ENCODE measurements at regions of chr21 and their contacts with region 1.

Region 1: DNA sequence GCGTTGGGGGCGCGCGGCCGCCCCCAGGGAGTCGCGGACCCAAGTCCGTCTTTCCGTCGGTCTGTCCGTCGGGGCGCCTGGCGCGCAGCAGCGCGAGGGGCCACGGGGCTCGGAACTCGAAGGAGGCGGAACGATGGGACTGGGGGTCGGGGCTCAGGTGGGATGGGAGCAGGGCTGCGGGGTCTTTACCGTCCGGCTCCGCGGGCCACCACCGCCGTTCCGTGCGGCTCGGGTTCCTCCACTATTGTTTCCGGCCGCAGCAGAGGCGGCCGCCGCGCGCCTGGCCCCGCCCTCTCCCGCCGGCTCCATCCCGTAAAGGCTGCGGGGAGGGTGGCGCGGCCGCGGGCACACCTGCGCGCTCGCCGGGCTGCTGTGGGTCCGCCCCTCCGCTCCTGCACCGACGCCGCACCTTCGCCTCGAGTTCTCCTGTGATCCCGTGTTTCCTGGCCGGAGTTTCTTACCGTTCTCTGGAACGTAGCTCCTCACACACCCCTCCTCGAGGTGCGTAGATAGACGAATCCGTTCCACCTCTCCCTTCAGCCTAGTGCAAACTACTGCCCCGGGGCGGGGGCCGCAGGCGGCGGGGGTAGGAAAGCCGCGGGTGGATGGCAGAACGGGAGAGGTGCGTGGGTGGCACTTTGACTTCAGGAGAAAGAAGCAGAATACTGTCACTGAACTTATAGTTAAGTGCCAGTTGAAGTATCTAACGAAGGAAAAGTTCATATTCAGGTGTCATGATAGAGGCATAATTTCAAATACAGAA is at the start of gene C21orf91:
- DNase-seq: peak; percentile 94 to 95
- ATAC-seq: peak; percentile 97
- H3K4me3 ChIP-seq: peak within 1 kb of the TSS; percentile 63 to 92
- H3K27ac ChIP-seq: peak within 1 kb of the TSS; percentile 23 to 81
- H3K4me1 ChIP-seq: peaks cover 0 to 2% of the 10 kb centered on the region in 2 donors
- H3K27me3 ChIP-seq: no peaks in the 10 kb centered on the region
- total RNA-seq, gene C21orf91: 17.5 to 19.2 TPM

Region 2: GRCh38 chr21:17611414-17612022 is 207.8 kb before region 1 on chr21:
- intact Hi-C with region 1: loop called in 1 of 2 experiments (anchors 5 kb)
- DNase-seq: peak; percentile 90 to 92
- ATAC-seq: peak; percentile 89
- H3K4me3 ChIP-seq: peak overlapping the region; percentile 58 to 99
- H3K27ac ChIP-seq: peak overlapping the region in 1 of 2 donors; percentile 74
- H3K4me1 ChIP-seq: peaks cover 0 to 3% of the 10 kb centered on the region in 2 donors
- H3K27me3 ChIP-seq: no peaks in the 10 kb centered on the region

Region 3: DNA sequence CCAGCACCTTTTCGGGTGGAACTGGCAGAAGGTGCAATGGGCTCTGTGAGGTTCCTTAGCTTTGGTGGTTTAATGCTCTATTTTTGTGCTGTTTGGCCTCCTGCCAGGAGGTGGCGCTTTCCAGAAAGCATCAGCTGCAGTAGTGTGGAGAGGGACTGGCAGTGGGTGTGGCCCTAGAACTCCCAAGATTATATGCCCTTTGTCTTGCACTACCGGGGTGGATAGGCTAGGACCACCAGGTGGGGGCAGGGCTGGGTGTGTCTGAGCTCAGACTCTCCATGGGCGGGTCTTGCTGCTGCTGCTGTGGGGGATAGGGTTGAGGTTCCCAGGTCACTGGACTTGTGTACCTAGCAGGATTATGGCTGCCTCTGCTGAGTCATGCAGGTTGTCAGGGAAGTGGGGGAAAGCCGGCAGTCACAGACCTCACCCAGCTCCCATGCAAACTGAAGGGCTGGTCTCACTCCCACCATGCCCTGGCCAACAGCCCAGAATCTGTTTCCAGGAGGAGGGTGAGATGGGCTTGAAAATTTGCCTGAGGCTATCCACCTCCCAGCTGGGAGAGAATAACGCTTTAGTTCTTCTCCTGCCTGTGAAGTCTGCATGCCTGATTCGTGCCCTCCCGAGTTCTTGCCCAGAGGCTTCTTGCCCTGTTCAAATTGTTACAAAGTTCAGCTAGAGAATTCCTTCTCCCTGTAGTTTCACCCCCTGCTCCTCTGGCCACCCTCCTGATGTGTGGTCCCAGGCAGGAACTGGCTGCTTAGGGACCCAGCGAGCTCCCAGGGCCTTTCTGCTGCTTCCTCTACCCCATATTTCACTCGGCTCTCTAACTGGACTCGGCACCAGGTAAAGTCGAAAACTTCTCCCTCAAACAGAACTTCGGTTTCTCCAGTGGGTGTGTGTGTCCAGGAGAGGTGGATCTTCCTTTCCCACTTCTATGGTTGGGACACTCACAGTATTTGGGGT is 130.1 kb before region 1 on chr21:
- intact Hi-C with region 1: loop called in 1 of 2 experiments (anchors 10 kb)
- DNase-seq: peak in 1 of 2 donors; percentile 56
- ATAC-seq: no peak
- H3K4me3 ChIP-seq: no peak overlapping the region
- H3K27ac ChIP-seq: no peak overlapping the region
- H3K4me1 ChIP-seq: no peaks in the 10 kb centered on the region
- H3K27me3 ChIP-seq: no peaks in the 10 kb centered on the region

Region 4: DNA sequence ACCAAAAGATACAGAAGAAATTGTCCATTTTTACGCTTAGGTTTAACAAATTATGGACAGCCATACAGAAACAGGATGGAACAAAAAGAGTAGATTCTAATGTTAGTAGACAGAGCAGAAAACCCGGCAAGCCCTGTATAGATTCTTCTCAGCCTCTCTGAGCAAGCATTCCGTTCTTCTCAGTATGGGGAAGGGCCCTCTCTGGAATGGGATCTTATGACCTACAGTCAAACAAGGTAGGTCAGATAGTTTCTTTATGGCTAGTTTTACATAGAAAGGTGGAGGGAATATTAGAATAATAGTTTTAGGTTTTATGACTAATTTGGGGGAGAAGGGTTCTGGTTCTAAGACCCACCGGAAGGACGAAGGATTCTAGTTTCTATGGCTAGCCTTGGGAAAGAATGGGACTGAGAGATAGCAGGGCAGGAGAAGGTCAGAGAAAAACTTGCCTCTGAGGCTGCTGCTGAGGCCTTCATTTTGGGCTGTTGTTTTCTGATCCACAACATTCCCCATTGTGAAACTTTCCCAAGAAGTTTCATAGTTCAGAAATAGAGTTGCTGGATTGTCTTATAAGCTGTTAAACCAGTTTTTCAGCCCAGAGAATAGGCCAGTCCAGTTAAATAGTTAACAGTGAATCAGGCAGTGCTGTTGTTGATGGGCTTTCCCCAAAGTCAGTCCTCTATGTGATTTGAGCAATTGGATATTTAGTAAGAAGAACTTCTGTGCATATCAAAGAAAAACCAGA is 77.3 kb before region 1 on chr21:
- intact Hi-C with region 1: loop called in 1 of 2 experiments (anchors 10 kb)
- DNase-seq: no peak
- ATAC-seq: no peak
- H3K4me3 ChIP-seq: no peak overlapping the region
- H3K27ac ChIP-seq: no peak overlapping the region
- H3K4me1 ChIP-seq: no peaks in the 10 kb centered on the region
- H3K27me3 ChIP-seq: no peaks in the 10 kb centered on the region

Region 5: DNA sequence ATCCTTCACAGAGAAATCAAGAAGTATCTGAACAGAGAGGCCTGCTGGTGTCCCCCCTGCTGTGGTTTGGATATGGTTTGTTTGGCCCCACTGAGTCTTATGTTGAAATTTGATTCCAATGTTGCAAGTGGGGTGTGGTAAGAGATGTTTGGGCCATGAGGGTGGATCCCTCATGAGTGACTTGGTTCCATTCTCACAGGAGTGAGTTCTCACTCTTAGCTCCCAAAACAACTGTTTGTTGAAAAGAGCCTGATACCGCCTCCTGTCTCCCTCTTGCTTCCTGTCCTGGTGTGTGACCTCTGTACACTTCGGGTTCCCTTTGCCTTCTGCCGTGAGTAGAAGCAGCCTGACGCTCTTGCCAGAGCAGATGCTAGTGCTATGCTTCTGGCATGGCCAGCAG is 60.6 kb before region 1 on chr21:
- intact Hi-C with region 1: no loop called
- DNase-seq: no peak
- ATAC-seq: no peak
- H3K4me3 ChIP-seq: no peak overlapping the region
- H3K27ac ChIP-seq: no peak overlapping the region
- H3K4me1 ChIP-seq: no peaks in the 10 kb centered on the region
- H3K27me3 ChIP-seq: peaks cover 0 to 2% of the 10 kb centered on the region in 2 donors

Region 6: GRCh38 chr21:17903029-17903806 is 83.9 kb after region 1 on chr21:
- intact Hi-C with region 1: loop called in 1 of 2 experiments (anchors 10 kb)
- DNase-seq: no peak
- ATAC-seq: no peak
- H3K4me3 ChIP-seq: no peak overlapping the region
- H3K27ac ChIP-seq: no peak overlapping the region
- H3K4me1 ChIP-seq: no peaks in the 10 kb centered on the region
- H3K27me3 ChIP-seq: no peaks in the 10 kb centered on the region

Region 7: GRCh38 chr21:17925000-17925610 is 105.8 kb after region 1 on chr21:
- intact Hi-C with region 1: loop called in 1 of 2 experiments (anchors 10 kb)
- DNase-seq: no peak
- ATAC-seq: peak; percentile 88
- H3K4me3 ChIP-seq: no peak overlapping the region
- H3K27ac ChIP-seq: no peak overlapping the region
- H3K4me1 ChIP-seq: no peaks in the 10 kb centered on the region
- H3K27me3 ChIP-seq: no peaks in the 10 kb centered on the region